K562 (cell line): ENCODE measurements at regions of chr17 and their contacts with region 1.

Region 1: DNA sequence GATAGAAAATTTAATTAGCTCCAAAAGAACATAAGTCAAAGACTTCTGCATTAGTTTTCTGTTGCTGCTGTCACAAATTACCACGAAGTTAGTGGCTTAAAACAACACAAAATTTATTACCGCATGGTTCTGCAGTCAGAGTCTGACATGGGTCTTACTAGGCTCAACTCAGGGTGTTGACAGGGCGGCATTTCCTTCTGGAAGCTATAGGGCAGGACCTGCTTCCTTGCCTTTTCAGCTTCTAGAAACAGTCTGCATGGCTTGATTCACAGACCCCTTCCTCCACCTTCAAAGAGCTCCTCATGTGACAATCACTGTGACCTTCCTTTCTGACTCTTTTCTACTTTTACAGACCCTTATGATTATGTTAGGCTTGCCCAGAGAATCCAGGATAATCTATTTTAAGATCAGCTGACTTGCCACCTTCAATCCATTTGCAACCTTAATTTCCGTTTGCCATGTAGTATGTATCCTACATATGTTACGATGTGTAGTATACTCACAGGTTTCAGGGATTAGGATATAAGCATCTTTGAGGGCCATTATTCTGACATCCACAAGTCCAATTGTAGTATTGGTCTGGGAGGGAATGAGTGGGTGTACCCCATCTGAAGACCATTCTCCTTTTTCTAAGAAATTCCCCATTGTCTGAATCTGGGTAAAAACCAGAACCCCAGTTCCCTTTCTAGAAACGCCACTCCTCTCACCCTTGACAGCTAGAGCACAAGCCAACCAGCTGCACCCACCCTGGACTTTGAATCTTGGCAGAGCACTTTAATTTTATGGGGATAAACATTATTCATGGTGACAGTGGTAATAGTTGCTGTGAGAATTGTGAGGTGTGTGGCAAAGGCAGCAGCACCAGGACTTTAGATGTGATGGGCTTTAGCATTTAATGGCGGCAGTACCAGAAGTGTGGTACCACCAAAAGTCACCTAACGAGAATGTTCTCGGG is 265.5 kb downstream of the KCNJ2 start:
- DNase-seq: no peak
- ATAC-seq: no peak
- H3K4me3 ChIP-seq: no peak overlapping the region
- H3K27ac ChIP-seq: no peak overlapping the region
- H3K4me1 ChIP-seq: no peaks in the 10 kb centered on the region
- H3K27me3 ChIP-seq: no peaks in the 10 kb centered on the region
- CTCF ChIP-seq: no peak
- EP300 ChIP-seq: no peak
- POLR2A ChIP-seq: no peak
- RAD21 ChIP-seq: no peak

Region 2: DNA sequence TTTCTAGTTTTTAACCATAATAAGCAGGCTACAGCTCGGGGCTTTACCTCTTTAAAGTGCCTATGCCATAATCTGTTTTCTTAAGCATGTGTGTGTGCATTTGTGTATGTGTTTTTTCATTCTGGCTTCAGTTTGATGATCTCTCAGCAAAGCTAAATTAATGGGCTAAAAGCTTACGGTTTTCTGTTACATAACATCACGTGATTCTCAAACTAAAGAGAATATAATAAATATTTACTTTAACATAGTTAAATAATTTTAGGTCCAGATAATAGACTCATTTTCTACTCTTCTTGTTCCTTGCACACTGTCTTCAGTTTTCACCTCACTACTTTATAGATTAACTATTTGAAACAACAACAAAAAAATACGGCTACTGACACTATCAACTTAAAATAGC is 51.0 kb after region 1 on chr17:
- CTCF ChIA-PET with region 1: no interaction called
- POLR2A ChIA-PET with region 1: no interaction called
- in situ Hi-C with region 1: loop called (anchors 5 kb)
- intact Hi-C with region 1: no loop called
- DNase-seq: no peak
- ATAC-seq: no peak
- H3K4me3 ChIP-seq: no peak overlapping the region
- H3K27ac ChIP-seq: no peak overlapping the region
- H3K4me1 ChIP-seq: no peaks in the 10 kb centered on the region
- H3K27me3 ChIP-seq: no peaks in the 10 kb centered on the region
- CTCF ChIP-seq: no peak
- EP300 ChIP-seq: no peak
- POLR2A ChIP-seq: no peak
- RAD21 ChIP-seq: no peak